ENCODE measurements at regions of chr11 and their contacts with region 1.

Region 1: DNA sequence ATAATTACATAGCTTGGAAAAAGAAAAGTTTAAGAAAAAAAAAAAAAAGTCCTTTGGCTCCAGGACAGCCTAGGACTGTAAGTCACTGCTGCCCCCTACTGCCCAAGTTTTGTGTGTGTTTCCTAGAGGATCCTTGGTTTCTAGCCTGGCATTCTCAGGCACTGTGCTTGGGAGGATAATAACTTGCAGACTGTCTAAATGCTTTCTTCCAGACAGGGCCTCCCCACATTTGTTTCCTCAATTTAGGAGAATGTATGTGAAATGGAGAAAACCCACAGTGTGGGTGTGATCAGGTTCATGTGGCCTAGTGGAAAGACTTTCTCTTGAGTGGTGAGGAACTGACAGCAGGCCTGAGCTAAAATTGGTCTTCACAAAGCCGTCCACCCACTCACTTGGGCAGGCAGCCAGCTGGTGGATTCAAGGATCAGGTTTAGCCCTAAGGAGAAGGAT is 191.0 kb downstream of the NAV2 start:
- DNase-seq: peak; percentile 64
- H3K4me3 ChIP-seq: no peak overlapping the region
- H3K27ac ChIP-seq: no peak overlapping the region
- H3K27me3 ChIP-seq: no peaks in the 10 kb centered on the region
- CTCF ChIP-seq: peak; percentile 87

Region 2: GRCh38 chr11:19553683-19554333 is 349.8 kb before region 1 on chr11:
- CTCF ChIA-PET with region 1: interaction called, 182 read pairs
- POLR2A ChIA-PET with region 1: no interaction called
- DNase-seq: peak; percentile 44
- H3K4me3 ChIP-seq: no peak overlapping the region
- H3K27ac ChIP-seq: no peak overlapping the region
- H3K27me3 ChIP-seq: peaks cover 31% of the 10 kb centered on the region
- CTCF ChIP-seq: peak; percentile 91

Region 3: DNA sequence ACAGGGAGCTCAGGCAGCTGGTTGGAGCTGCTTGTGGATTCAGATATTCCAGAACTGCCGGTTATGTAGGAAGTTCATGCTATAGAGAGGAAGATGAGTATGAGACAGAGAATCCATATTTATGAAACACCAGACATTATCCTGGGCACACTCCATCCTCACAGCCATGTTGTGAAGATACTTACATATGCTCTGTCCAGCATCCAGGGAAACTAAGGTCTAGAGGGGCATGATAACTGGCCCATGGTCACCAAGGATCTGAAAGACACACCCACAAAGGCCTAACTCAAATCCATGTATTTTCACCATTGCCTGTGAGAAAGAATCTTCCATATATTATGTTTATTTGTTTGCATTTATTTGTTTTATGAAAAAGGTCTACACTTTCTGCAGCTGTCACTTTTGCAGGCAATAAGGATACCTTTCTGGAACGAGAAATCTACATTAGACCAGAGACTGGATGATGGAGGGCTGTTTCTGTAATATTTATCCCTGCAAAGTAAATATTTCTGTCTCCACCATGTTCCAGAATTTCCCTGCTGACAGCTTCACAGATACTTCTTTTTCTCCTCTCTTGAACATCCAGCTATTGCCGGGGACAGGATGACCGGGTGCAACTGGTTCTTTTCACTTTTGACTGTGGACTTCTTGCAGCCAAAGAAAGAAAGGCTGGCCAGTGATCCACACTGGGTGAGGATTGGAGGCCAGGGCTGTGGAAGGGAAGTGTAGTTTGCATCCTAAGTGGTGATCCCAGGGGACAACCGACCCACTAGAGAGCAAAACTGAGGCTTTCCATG is 336.9 kb before region 1 on chr11:
- CTCF ChIA-PET with region 1: interaction called, 182 read pairs
- POLR2A ChIA-PET with region 1: no interaction called
- DNase-seq: no peak
- H3K4me3 ChIP-seq: no peak overlapping the region
- H3K27ac ChIP-seq: no peak overlapping the region
- H3K27me3 ChIP-seq: peaks cover 4% of the 10 kb centered on the region
- CTCF ChIP-seq: no peak

Region 4: GRCh38 chr11:19753451-19754106 is 150.1 kb before region 1 on chr11:
- CTCF ChIA-PET with region 1: interaction called, 11 read pairs
- POLR2A ChIA-PET with region 1: no interaction called
- DNase-seq: no peak
- H3K4me3 ChIP-seq: no peak overlapping the region
- H3K27ac ChIP-seq: no peak overlapping the region
- H3K27me3 ChIP-seq: no peaks in the 10 kb centered on the region
- CTCF ChIP-seq: no peak

Region 5: GRCh38 chr11:19919050-19919561 is 15.5 kb after region 1 on chr11:
- CTCF ChIA-PET with region 1: interaction called, 37 read pairs
- POLR2A ChIA-PET with region 1: no interaction called
- DNase-seq: peak; percentile 85
- H3K4me3 ChIP-seq: no peak overlapping the region
- H3K27ac ChIP-seq: peak overlapping the region; percentile 77
- H3K27me3 ChIP-seq: no peaks in the 10 kb centered on the region
- CTCF ChIP-seq: no peak

Region 6: DNA sequence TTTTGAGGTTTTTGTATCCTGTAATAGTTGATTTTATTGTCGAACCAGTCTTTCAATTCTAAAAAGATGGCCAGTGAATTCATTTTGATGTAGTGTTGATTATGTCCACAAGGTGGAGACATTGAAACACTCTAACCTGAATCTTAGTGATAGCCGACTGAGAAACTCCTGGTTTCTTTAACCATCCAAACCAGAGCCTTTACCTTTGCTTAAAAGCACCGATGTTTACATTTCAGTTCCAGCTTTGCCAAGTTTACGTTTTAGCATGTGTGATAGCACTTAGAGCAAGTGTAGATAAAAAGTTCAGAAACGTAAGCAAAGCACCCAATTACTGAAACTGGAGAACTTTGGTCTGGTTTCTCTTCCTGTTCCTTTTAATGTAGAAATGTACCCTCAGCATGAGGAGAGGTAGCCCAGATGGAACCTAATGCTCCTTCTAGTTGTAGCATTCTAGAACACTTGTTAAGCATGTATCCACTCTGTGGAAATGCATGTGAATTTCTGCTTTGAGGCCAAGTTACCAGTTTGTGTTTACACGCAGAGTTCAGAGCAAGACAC is 48.0 kb after region 1 on chr11:
- CTCF ChIA-PET with region 1: interaction called, 10 read pairs
- POLR2A ChIA-PET with region 1: no interaction called
- DNase-seq: no peak
- H3K4me3 ChIP-seq: no peak overlapping the region
- H3K27ac ChIP-seq: no peak overlapping the region
- H3K27me3 ChIP-seq: no peaks in the 10 kb centered on the region
- CTCF ChIP-seq: peak; percentile 71

Measured in AG04450 (cell line).